ENCODE measurements at regions of chr19 and their contacts with region 1.

Region 1: DNA sequence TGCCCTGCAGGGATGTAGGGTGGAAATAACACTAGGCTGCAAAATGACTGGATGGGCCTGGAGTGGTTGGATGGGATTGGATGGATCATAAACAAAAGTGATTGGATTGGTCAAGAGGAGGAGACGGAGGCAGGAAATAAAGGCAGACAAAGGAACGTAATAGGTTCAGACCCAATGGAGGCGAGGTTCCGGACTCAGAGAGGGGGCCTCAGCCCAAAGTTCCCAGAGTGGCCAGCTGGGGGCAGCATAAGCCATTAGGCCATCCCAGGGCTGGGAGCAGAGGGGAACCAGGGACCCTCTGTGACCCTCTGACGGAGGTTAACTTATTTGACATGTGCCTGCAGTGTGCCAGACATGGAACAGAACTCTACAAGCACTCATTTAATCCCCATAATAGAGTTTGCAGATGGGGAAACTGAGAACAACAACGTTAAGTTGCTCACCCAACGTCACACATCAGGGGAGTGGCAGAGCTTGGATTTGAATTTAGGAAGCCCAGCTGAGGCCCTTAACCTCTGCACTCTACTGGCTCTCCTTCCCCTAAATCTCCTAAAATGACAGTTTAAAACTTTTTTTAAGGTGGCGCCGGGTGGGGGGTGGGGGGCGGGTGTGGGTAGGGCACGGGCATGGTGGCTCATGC is 15.3 kb upstream of the MAP1S start:
- DNase-seq: peak; percentile 52 to 83 (median 73)
- ATAC-seq: peak; percentile 99
- H3K4me3 ChIP-seq: no peak overlapping the region
- H3K4me3 Mint-ChIP-seq: no peak overlapping the region
- H3K27ac ChIP-seq: no peak overlapping the region
- H3K27ac Mint-ChIP-seq: no peak overlapping the region
- H3K4me1 ChIP-seq: no peaks in the 10 kb centered on the region
- H3K4me1 Mint-ChIP-seq: no peaks in the 10 kb centered on the region
- H3K27me3 ChIP-seq: no peaks in the 10 kb centered on the region
- H3K27me3 Mint-ChIP-seq: peaks cover 9% of the 10 kb centered on the region
- CTCF ChIP-seq: peak; percentile 89

Region 2: DNA sequence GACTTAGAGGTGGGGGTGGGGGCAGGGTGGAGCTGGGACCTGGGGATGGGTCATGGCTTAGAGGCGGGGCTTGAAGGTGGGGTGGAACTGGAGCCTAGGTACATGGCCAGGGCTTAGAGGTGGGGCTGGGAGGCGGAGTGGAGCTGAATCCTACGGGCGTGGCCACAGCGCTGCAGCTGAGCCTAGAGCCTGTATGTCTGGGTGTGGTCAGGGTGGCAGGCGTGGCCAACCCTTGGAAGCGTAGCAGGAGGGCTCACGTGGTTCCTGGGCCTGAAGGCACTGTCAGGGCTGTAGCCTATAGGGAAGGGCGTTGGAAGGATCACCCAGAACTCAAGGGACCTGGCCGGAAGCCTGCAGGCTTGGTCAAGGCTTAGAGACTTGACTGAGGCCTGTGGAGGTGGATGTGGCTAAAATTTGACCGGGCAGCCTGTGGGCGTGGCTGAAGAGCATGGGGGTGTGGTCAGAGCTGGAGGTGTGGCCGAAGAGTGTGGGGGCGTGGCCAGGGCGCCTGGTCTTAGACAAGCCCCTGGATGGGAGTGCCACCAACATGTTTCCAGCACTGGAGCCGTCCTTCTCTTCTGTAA is 124.2 kb before region 1 on chr19:
- CTCF ChIA-PET with region 1: no interaction called
- POLR2A ChIA-PET with region 1: no interaction called
- intact Hi-C with region 1: no loop called
- DNase-seq: peak in 2 of 9 experiments; percentile 36 to 43
- ATAC-seq: peak; percentile 52
- H3K4me3 ChIP-seq: no peak overlapping the region
- H3K4me3 Mint-ChIP-seq: no peak overlapping the region
- H3K27ac ChIP-seq: no peak overlapping the region
- H3K27ac Mint-ChIP-seq: peak overlapping the region; percentile 55
- H3K4me1 ChIP-seq: no peaks in the 10 kb centered on the region
- H3K4me1 Mint-ChIP-seq: no peaks in the 10 kb centered on the region
- H3K27me3 ChIP-seq: no peaks in the 10 kb centered on the region
- H3K27me3 Mint-ChIP-seq: no peaks in the 10 kb centered on the region
- CTCF ChIP-seq: no peak

Region 3: GRCh38 chr19:17755977-17756670 is 52.2 kb after region 1 on chr19:
- CTCF ChIA-PET with region 1: interaction called, 13 read pairs
- POLR2A ChIA-PET with region 1: no interaction called
- intact Hi-C with region 1: no loop called
- DNase-seq: peak in 8 of 9 experiments; percentile 22 to 61 (median 48)
- ATAC-seq: no peak
- H3K4me3 ChIP-seq: no peak overlapping the region
- H3K4me3 Mint-ChIP-seq: no peak overlapping the region
- H3K27ac ChIP-seq: no peak overlapping the region
- H3K27ac Mint-ChIP-seq: peak overlapping the region; percentile 69
- H3K4me1 ChIP-seq: peaks cover 35% of the 10 kb centered on the region
- H3K4me1 Mint-ChIP-seq: peaks cover 42% of the 10 kb centered on the region
- H3K27me3 ChIP-seq: no peaks in the 10 kb centered on the region
- H3K27me3 Mint-ChIP-seq: no peaks in the 10 kb centered on the region
- CTCF ChIP-seq: no peak

Region 4: DNA sequence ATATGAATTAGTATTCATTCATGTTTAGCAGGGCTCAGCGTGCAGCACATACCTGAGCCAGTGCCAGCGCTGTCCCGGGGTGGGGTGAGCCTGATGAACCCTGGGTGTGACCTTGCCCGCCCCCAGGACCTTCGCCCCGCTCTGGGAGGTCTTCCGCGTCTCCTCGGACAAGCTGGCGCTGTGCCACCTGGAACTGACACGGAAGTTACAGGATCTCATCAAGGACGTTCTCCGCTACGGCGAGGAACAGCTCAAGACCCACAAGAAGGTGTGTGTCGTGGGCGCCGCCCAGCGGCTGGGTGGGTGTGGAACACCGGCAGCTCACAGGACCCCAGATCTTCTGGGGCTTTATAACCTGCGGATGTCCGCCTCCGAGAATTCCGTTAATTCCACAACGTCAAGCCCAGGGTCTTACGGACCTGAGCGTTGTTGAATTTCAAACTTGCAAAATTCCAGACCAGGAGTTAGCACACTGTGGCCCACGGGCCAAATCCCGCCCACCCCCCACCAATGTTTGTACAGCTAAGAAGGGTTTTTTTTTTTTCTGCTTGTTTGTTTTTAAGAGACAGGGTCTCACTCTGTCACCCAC is 62.7 kb after region 1 on chr19:
- CTCF ChIA-PET with region 1: interaction called, 35 read pairs
- POLR2A ChIA-PET with region 1: no interaction called
- intact Hi-C with region 1: loop called in 1 of 2 experiments (anchors 2 kb)
- DNase-seq: peak in 5 of 9 experiments; percentile 40 to 62 (median 51)
- ATAC-seq: peak; percentile 48
- H3K4me3 ChIP-seq: no peak overlapping the region
- H3K4me3 Mint-ChIP-seq: no peak overlapping the region
- H3K27ac ChIP-seq: no peak overlapping the region
- H3K27ac Mint-ChIP-seq: no peak overlapping the region
- H3K4me1 ChIP-seq: no peaks in the 10 kb centered on the region
- H3K4me1 Mint-ChIP-seq: no peaks in the 10 kb centered on the region
- H3K27me3 ChIP-seq: no peaks in the 10 kb centered on the region
- H3K27me3 Mint-ChIP-seq: no peaks in the 10 kb centered on the region
- CTCF ChIP-seq: no peak

Region 5: DNA sequence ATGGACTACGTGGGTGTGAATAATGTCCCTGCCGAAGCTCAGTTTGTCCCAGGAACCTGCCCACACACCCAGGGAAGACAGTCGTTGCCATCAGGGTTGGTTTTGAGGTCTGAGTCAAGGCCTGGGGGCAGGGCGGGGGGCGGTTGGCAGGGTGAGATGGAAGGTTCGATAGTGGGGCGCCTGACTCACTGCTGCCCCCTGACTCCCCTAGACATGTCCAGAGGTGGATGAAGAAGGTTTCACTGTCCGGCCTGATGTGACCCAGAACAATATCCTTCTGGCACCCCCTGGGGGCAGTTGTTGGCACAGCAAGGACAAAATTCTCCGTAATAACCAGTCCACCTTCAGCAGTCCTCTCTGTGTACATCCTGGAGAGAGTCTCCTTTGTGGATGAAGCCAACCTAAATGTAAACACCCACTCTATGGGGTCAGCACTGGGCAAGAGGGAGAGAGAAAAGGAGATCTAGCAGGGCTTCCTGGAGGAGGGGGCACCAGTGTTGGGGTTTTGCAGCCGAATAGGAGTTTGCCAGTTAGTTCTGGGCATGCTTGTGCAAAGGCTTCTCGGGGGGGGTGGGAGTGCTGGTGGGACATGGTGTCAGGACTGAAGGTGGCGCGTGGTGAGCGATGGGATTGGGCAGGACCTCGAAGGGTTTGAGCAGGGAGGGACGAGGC is 71.4 kb after region 1 on chr19:
- CTCF ChIA-PET with region 1: interaction called, 57 read pairs
- POLR2A ChIA-PET with region 1: no interaction called
- intact Hi-C with region 1: loop called (anchors 1 to 2 kb)
- DNase-seq: peak in 5 of 9 experiments; percentile 46 to 61 (median 49)
- ATAC-seq: no peak
- H3K4me3 ChIP-seq: no peak overlapping the region
- H3K4me3 Mint-ChIP-seq: no peak overlapping the region
- H3K27ac ChIP-seq: no peak overlapping the region
- H3K27ac Mint-ChIP-seq: no peak overlapping the region
- H3K4me1 ChIP-seq: no peaks in the 10 kb centered on the region
- H3K4me1 Mint-ChIP-seq: peaks cover 3% of the 10 kb centered on the region
- H3K27me3 ChIP-seq: no peaks in the 10 kb centered on the region
- H3K27me3 Mint-ChIP-seq: no peaks in the 10 kb centered on the region
- CTCF ChIP-seq: peak; percentile 58

Region 6: GRCh38 chr19:17784201-17785008 is 80.5 kb after region 1 on chr19:
- CTCF ChIA-PET with region 1: interaction called, 57 read pairs
- POLR2A ChIA-PET with region 1: interaction called, 3 read pairs
- intact Hi-C with region 1: loop called (anchors 1 kb)
- DNase-seq: peak; percentile 55 to 81 (median 74)
- ATAC-seq: peak; percentile 94
- H3K4me3 ChIP-seq: no peak overlapping the region
- H3K4me3 Mint-ChIP-seq: no peak overlapping the region
- H3K27ac ChIP-seq: no peak overlapping the region
- H3K27ac Mint-ChIP-seq: no peak overlapping the region
- H3K4me1 ChIP-seq: peaks cover 4% of the 10 kb centered on the region
- H3K4me1 Mint-ChIP-seq: peaks cover 11% of the 10 kb centered on the region
- H3K27me3 ChIP-seq: no peaks in the 10 kb centered on the region
- H3K27me3 Mint-ChIP-seq: no peaks in the 10 kb centered on the region
- CTCF ChIP-seq: peak; percentile 82

Region 7: DNA sequence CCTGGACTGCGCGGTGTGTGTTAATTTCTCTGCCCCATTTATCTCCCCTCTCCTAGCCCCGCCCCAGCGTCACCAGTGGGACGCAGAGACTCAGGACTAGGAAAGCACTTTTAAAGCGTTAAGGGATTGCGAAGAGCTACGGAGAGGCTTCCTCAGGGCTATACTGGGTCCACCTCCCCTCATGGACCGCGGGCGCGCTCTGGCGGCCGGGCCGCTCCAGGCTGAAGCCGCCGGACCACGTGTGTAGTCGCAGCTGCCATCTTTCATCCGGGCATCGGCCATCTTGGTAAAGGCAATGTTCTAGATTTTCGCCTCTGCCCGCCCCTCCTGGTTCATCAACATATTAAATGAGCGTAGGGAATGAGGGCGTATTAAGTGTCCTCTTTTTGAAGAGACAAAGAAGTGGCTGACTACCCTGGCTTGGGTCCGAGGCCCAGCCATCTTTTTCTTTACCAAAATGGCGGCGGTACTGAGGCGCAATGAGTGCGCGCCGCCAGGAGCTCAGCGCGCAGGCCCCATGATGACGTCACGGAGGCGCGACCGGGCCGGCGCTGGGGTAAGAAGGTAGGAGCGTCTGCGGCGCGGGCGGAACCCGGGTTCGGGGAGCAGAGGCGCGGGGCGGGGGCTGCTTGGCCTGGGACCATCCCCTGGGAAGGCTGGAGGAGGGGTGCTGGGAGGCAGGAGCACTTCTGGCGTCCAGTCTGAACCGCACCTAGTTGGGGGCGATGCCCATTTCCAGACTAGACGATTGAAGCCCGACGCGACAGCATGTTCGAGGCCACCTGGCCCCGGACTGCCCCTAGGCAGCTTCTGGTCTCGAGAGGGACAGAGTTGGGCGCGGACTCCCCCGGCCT is 228.8 kb after region 1 on chr19 and contains the start of gene CCDC124:
- CTCF ChIA-PET with region 1: interaction called, 15 read pairs
- POLR2A ChIA-PET with region 1: no interaction called
- intact Hi-C with region 1: loop called (anchors 5 kb)
- DNase-seq: peak; percentile 83 to 95 (median 91)
- ATAC-seq: peak; percentile 92
- H3K4me3 ChIP-seq: peak within 1 kb of the TSS; percentile 76 to 82
- H3K4me3 Mint-ChIP-seq: peak within 1 kb of the TSS; percentile 92
- H3K27ac ChIP-seq: peak within 1 kb of the TSS; percentile 75 to 99
- H3K27ac Mint-ChIP-seq: peak within 1 kb of the TSS; percentile 95
- H3K4me1 ChIP-seq: peaks cover 15% of the 10 kb centered on the region
- H3K4me1 Mint-ChIP-seq: peaks cover 21% of the 10 kb centered on the region
- H3K27me3 ChIP-seq: no peaks in the 10 kb centered on the region
- H3K27me3 Mint-ChIP-seq: no peaks in the 10 kb centered on the region
- CTCF ChIP-seq: peak; percentile 89
- total RNA-seq, gene CCDC124: 29.7 to 35.9 TPM